ENCODE measurements at regions of chr6 and their contacts with region 1.

Region 1: DNA sequence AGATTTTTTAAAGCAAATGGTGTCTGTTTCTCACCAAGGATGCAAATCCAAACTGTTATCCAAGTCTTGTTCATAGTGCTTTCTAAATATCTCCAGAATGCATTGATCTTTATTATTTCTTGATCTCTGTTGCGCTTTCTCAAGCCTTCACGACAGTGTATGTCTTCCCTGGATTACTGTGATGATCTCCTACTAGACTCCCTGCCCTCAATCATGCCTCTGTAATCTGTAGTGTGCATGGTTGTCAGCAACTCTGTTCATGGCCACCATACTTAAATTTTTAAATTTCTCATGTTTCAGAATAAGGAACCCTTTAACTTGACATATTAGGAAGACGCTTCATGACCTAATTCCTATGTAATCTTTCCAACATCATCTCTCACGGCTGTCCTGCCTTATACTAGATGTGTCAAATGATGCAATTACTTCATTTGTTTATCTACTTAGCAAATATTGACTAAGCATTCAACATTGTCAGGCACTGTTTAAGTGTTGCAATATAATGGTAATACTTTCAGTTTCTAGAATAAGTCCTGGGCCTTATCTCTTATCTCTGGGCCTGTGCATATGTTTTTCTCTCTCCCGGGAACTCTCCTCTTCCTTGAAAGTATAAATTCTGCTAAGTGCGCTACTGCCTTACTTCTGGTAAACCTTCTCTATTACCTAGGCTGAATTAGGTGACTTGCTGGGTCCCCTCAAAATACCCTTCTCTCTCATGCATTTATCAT is 25.6 kb upstream of the AHI1 start:
- DNase-seq: no peak
- H3K4me3 ChIP-seq: no peak overlapping the region
- H3K27ac ChIP-seq: no peak overlapping the region
- H3K4me1 ChIP-seq: no peaks in the 10 kb centered on the region
- H3K27me3 ChIP-seq: no peaks in the 10 kb centered on the region
- CTCF ChIP-seq: no peak

Region 2: DNA sequence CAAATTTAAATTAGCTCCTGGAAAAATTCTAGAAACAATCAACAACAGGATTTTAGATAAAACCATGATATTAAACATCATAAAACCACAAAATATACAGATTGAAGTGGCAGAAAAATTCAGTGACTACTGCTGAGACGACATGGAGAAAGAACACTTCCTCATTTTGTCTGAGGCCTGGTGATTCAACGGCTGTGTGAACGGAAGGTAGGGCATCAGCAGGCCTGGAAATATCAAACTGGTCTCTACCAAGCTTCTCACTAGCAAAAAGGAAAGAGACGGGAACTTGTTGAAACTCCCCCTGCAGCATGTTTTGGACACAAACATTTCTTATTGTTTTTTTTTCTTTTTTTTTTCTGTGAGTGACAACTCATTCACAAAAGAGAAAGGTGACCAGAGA is 32.4 kb after region 1 on chr6:
- CTCF ChIA-PET with region 1: no interaction called
- POLR2A ChIA-PET with region 1: no interaction called
- intact Hi-C with region 1: no loop called
- DNase-seq: no peak
- H3K4me3 ChIP-seq: no peak overlapping the region
- H3K27ac ChIP-seq: no peak overlapping the region
- H3K4me1 ChIP-seq: no peaks in the 10 kb centered on the region
- H3K27me3 ChIP-seq: peaks cover 92% of the 10 kb centered on the region
- CTCF ChIP-seq: no peak

Region 3: DNA sequence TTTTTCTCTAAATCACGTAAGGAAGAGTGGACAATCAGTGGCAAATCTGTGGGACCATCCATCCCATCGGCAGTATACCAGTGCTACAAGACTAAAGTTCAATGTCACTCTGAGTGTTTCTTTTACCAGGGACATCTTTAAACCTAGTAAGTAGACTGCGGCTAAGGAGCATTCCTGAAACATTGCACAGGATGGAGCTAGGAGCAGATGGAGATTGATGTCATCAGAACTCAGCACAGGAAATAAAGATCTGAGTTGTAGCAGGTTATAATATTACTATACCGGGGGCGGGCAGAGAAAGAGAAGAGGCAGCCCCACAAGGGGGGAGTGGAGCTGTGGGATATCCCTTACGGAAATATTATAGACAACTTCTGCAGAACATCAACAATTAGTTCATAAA is 564.9 kb after region 1 on chr6:
- CTCF ChIA-PET with region 1: no interaction called
- POLR2A ChIA-PET with region 1: interaction called, 12 read pairs
- intact Hi-C with region 1: no loop called
- DNase-seq: no peak
- H3K4me3 ChIP-seq: no peak overlapping the region
- H3K27ac ChIP-seq: no peak overlapping the region
- H3K4me1 ChIP-seq: no peaks in the 10 kb centered on the region
- H3K27me3 ChIP-seq: no peaks in the 10 kb centered on the region
- CTCF ChIP-seq: no peak